CD4-positive, alpha-beta memory T cell (primary cell): ENCODE measurements at regions of chr10 and their contacts with region 1.

Region 1: GRCh38 chr10:110497438-110498086 is at the start of gene DUSP5:
- DNase-seq: peak; percentile 93 to 98 (median 96)
- H3K4me3 ChIP-seq: peak within 1 kb of the TSS; percentile 76 to 83
- H3K4me3 Mint-ChIP-seq: peak within 1 kb of the TSS; percentile 93 to 98 (median 96)
- H3K27ac ChIP-seq: peak within 1 kb of the TSS; percentile 79
- H3K27ac Mint-ChIP-seq: peak within 1 kb of the TSS; percentile 91 to 98 (median 96)
- H3K4me1 ChIP-seq: peaks cover 52% of the 10 kb centered on the region
- H3K4me1 Mint-ChIP-seq: peaks cover 45 to 68% (median 55%) of the 10 kb centered on the region in 4 donors
- H3K27me3 ChIP-seq: no peaks in the 10 kb centered on the region
- H3K27me3 Mint-ChIP-seq: no peaks in the 10 kb centered on the region
- total RNA-seq, gene DUSP5: 3.5 to 3.8 TPM

Region 2: DNA sequence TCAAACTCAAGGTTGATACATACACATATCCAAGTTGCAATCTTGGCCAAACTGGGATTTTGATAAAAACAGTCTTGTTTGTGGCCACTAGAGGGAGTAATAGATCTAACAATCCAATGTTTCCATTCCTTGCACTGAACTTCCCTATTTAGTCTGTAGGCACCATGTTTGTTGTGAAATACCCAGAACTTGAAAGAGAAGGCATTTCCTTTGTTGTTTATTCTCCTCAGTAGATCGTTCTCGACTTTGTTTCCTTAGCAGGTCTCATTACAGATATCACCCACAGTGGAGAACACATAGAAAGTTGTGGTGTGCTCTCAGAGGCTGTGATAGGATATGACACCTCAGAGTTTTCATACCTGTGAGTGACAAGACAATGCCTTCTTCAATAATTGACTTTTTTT is 360.4 kb before region 1 on chr10:
- CTCF ChIA-PET with region 1: no interaction called
- POLR2A ChIA-PET with region 1: interaction called, 4 read pairs
- intact Hi-C with region 1: loop called (anchors 5 kb)
- DNase-seq: peak; percentile 46 to 70 (median 66)
- H3K4me3 ChIP-seq: no peak overlapping the region
- H3K4me3 Mint-ChIP-seq: peak overlapping the region in 1 of 8 donors; percentile 0
- H3K27ac ChIP-seq: peak overlapping the region; percentile 7
- H3K27ac Mint-ChIP-seq: peak overlapping the region; percentile 7 to 83 (median 18)
- H3K4me1 ChIP-seq: peaks cover 24% of the 10 kb centered on the region
- H3K4me1 Mint-ChIP-seq: peaks cover 17 to 30% (median 26%) of the 10 kb centered on the region in 4 donors
- H3K27me3 ChIP-seq: no peaks in the 10 kb centered on the region
- H3K27me3 Mint-ChIP-seq: no peaks in the 10 kb centered on the region

Region 3: DNA sequence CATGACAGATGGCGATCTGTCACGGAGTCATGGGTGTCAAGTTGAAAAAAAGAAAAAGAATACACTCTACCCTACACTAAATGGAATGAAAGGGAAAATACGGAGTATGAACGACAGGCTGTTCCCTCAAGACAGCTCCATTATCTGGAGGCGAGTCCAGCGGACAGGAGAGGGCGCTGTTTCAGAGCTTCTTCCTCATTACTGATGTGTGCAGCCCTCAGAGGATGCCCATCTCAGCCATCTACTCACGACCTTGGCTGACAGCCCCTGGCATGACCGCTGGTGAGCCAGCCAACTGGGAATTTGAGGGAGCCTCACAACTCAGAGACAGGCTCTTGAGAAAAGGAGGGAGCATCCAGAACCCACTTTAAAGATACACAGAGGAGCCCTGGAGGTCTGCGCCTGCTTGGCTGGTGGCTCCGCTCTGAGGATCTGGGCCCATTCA is 143.2 kb before region 1 on chr10:
- CTCF ChIA-PET with region 1: interaction called, 142 read pairs
- POLR2A ChIA-PET with region 1: interaction called, 113 read pairs
- intact Hi-C with region 1: loop called (anchors 1 kb)
- DNase-seq: peak; percentile 70 to 78 (median 77)
- H3K4me3 ChIP-seq: no peak overlapping the region
- H3K4me3 Mint-ChIP-seq: peak overlapping the region in 7 of 8 donors; percentile 44 to 75 (median 53)
- H3K27ac ChIP-seq: peak overlapping the region; percentile 81
- H3K27ac Mint-ChIP-seq: peak overlapping the region; percentile 93 to 100 (median 100)
- H3K4me1 ChIP-seq: peaks cover 53% of the 10 kb centered on the region
- H3K4me1 Mint-ChIP-seq: peaks cover 43 to 57% (median 52%) of the 10 kb centered on the region in 4 donors
- H3K27me3 ChIP-seq: no peaks in the 10 kb centered on the region
- H3K27me3 Mint-ChIP-seq: no peaks in the 10 kb centered on the region

Region 4: GRCh38 chr10:110512461-110513187 is 15.1 kb after region 1 on chr10:
- CTCF ChIA-PET with region 1: interaction called, 13 read pairs
- POLR2A ChIA-PET with region 1: interaction called, 24 read pairs
- intact Hi-C with region 1: no loop called
- DNase-seq: no peak
- H3K4me3 ChIP-seq: no peak overlapping the region
- H3K4me3 Mint-ChIP-seq: no peak overlapping the region
- H3K27ac ChIP-seq: no peak overlapping the region
- H3K27ac Mint-ChIP-seq: peak overlapping the region in 6 of 7 donors; percentile 6 to 60 (median 18)
- H3K4me1 ChIP-seq: no peaks in the 10 kb centered on the region
- H3K4me1 Mint-ChIP-seq: peaks cover 4 to 25% (median 12%) of the 10 kb centered on the region in 4 donors
- H3K27me3 ChIP-seq: no peaks in the 10 kb centered on the region
- H3K27me3 Mint-ChIP-seq: no peaks in the 10 kb centered on the region

Region 5: GRCh38 chr10:110547139-110547761 is 49.7 kb after region 1 on chr10:
- CTCF ChIA-PET with region 1: interaction called, 17 read pairs
- POLR2A ChIA-PET with region 1: interaction called, 5 read pairs
- intact Hi-C with region 1: loop called (anchors 1 kb)
- DNase-seq: peak in 4 of 5 donors; percentile 67 to 74 (median 70)
- H3K4me3 ChIP-seq: no peak overlapping the region
- H3K4me3 Mint-ChIP-seq: no peak overlapping the region
- H3K27ac ChIP-seq: no peak overlapping the region
- H3K27ac Mint-ChIP-seq: peak overlapping the region in 1 of 7 donors; percentile 59
- H3K4me1 ChIP-seq: peaks cover 8% of the 10 kb centered on the region
- H3K4me1 Mint-ChIP-seq: peaks cover 4 to 8% (median 5%) of the 10 kb centered on the region in 4 donors
- H3K27me3 ChIP-seq: peaks cover 3% of the 10 kb centered on the region
- H3K27me3 Mint-ChIP-seq: peaks cover 1 to 13% of the 10 kb centered on the region in 2 donors

Region 6: GRCh38 chr10:110864662-110865140 is 367.1 kb after region 1 on chr10:
- CTCF ChIA-PET with region 1: no interaction called
- POLR2A ChIA-PET with region 1: no interaction called
- intact Hi-C with region 1: loop called (anchors 5 kb)
- DNase-seq: peak; percentile 85 to 91 (median 87)
- H3K4me3 ChIP-seq: peak overlapping the region in 1 of 2 donors; percentile 31
- H3K4me3 Mint-ChIP-seq: peak overlapping the region; percentile 81 to 93 (median 86)
- H3K27ac ChIP-seq: peak overlapping the region; percentile 98
- H3K27ac Mint-ChIP-seq: peak overlapping the region; percentile 91 to 100 (median 99)
- H3K4me1 ChIP-seq: peaks cover 99% of the 10 kb centered on the region
- H3K4me1 Mint-ChIP-seq: peaks cover 78 to 100% (median 93%) of the 10 kb centered on the region in 4 donors
- H3K27me3 ChIP-seq: no peaks in the 10 kb centered on the region
- H3K27me3 Mint-ChIP-seq: no peaks in the 10 kb centered on the region